Activated naive CD4-positive, alpha-beta T cell treated with anti-CD3 and anti-CD28 coated beads for 36 hours (primary cell): ENCODE measurements at regions of chr12 and their contacts with region 1.

Region 1: GRCh38 chr12:110937104-110937641 is 16.8 kb upstream of the MYL2 start:
- DNase-seq: peak; percentile 68
- H3K4me3 Mint-ChIP-seq: no peak overlapping the region
- H3K27ac Mint-ChIP-seq: no peak overlapping the region
- H3K4me1 Mint-ChIP-seq: peaks cover 7% of the 10 kb centered on the region
- H3K27me3 Mint-ChIP-seq: peaks cover 13% of the 10 kb centered on the region

Region 2: GRCh38 chr12:111174251-111174960 is 237.2 kb after region 1 on chr12:
- CTCF ChIA-PET with region 1: interaction called, 3 read pairs
- intact Hi-C with region 1: loop called (anchors 2 kb)
- DNase-seq: peak; percentile 19
- H3K4me3 Mint-ChIP-seq: no peak overlapping the region
- H3K27ac Mint-ChIP-seq: no peak overlapping the region
- H3K4me1 Mint-ChIP-seq: peaks cover 5% of the 10 kb centered on the region
- H3K27me3 Mint-ChIP-seq: peaks cover 11% of the 10 kb centered on the region

Region 3: DNA sequence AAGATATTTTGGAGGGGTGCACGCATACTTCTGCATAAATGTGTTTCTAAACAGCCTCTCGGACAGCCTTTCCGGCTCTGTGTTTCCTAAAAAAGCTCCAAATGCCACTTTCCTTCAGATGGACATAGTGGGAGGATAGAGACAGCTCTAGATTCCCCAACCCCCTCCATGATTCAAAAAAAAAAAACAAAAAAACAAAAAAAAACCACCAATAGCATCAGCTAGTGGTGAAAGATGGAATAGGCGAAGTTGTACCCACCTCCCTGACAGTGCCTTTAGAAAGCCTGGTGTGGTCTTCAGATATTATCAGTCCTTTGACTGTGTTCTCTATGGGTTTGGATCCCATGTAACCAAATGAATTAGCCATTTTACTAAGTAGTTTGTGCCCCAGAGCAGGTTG is 337.6 kb after region 1 on chr12:
- CTCF ChIA-PET with region 1: interaction called, 3 read pairs
- intact Hi-C with region 1: loop called (anchors 5 kb)
- DNase-seq: no peak
- H3K4me3 Mint-ChIP-seq: no peak overlapping the region
- H3K27ac Mint-ChIP-seq: no peak overlapping the region
- H3K4me1 Mint-ChIP-seq: peaks cover 1% of the 10 kb centered on the region
- H3K27me3 Mint-ChIP-seq: no peaks in the 10 kb centered on the region

Region 4: GRCh38 chr12:111313833-111314259 is 376.7 kb after region 1 on chr12:
- CTCF ChIA-PET with region 1: interaction called, 3 read pairs
- intact Hi-C with region 1: loop called (anchors 1 kb)
- DNase-seq: peak; percentile 77
- H3K4me3 Mint-ChIP-seq: no peak overlapping the region
- H3K27ac Mint-ChIP-seq: no peak overlapping the region
- H3K4me1 Mint-ChIP-seq: peaks cover 11% of the 10 kb centered on the region
- H3K27me3 Mint-ChIP-seq: peaks cover 10% of the 10 kb centered on the region